MCF 10A (cell line): ENCODE measurements at regions of chr20 and their contacts with region 1.

Region 1: DNA sequence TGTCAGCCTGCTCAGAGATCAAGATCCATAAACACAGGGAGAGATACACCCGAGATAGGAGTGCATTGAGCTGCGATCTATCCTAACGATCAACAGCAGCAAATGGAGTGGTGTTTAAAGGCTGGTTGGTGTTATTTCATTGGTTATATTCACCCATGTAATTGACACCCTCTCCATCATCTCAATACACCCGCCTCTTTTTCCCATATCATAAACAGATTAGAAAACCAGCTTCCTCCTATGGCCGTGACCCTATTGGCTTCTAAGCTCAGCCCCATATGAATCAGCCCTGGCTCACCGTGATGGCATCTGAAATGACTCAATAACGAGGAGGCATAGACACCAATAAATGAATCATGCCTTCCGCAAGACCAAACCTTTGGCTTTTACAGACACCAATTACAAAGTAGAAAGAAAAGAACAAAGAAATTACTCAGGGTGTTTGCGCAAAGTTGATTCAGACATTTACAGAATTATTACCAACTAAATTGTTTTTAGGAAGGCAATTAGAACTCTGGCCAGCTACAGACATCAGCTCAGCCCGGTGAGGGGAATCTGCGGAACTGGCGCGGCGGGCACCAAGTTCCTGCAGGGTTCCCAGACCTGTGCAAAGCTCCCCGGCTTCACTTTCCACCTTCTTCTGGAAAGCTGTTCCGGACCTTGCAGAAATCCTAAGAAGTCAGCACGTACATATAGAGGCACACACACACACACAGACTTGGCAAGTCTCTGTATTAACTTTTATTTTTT is 11.5 kb downstream of the PMEPA1 start:
- DNase-seq: peak; percentile 99
- H3K4me3 Mint-ChIP-seq: peak overlapping the region; percentile 64
- H3K27ac Mint-ChIP-seq: peak overlapping the region; percentile 66
- H3K4me1 Mint-ChIP-seq: peaks cover 42% of the 10 kb centered on the region
- H3K27me3 Mint-ChIP-seq: no peaks in the 10 kb centered on the region
- CTCF ChIP-seq: no peak

Region 2: DNA sequence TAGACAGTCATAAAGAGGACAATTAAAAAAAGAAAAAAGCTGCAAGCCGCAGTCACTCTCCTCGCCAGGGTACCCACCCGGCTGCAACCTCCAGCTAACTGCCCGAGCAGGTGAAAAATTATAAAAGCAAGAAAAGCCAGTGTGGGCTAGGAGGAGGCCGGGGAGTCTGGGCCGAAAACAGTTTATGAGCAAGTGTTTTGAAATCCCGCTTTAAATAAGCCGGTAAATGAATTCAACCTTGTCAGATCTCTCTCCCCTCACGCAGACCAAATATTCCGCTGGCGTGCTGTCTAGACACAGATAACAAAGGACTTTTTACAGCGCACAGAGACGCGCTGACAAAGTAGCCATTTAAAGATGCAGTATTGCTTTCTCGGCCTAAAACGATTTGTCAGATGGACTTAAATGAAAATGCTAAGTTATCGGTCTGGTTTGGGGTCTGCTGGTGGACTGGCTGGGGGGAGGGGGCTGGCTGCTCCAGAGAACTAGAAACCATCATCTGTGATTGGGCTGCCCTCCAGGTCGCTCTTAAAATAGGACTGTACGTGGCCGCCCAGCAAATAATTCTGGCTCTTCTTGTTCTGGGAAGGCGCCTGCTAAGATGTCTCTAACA is 13.0 kb before region 1 on chr20:
- CTCF ChIA-PET with region 1: interaction called, 8 read pairs
- POLR2A ChIA-PET with region 1: interaction called, 12 read pairs
- intact Hi-C with region 1: no loop called
- DNase-seq: no peak
- H3K4me3 Mint-ChIP-seq: no peak overlapping the region
- H3K27ac Mint-ChIP-seq: no peak overlapping the region
- H3K4me1 Mint-ChIP-seq: peaks cover 22% of the 10 kb centered on the region
- H3K27me3 Mint-ChIP-seq: no peaks in the 10 kb centered on the region
- CTCF ChIP-seq: no peak

Region 3: DNA sequence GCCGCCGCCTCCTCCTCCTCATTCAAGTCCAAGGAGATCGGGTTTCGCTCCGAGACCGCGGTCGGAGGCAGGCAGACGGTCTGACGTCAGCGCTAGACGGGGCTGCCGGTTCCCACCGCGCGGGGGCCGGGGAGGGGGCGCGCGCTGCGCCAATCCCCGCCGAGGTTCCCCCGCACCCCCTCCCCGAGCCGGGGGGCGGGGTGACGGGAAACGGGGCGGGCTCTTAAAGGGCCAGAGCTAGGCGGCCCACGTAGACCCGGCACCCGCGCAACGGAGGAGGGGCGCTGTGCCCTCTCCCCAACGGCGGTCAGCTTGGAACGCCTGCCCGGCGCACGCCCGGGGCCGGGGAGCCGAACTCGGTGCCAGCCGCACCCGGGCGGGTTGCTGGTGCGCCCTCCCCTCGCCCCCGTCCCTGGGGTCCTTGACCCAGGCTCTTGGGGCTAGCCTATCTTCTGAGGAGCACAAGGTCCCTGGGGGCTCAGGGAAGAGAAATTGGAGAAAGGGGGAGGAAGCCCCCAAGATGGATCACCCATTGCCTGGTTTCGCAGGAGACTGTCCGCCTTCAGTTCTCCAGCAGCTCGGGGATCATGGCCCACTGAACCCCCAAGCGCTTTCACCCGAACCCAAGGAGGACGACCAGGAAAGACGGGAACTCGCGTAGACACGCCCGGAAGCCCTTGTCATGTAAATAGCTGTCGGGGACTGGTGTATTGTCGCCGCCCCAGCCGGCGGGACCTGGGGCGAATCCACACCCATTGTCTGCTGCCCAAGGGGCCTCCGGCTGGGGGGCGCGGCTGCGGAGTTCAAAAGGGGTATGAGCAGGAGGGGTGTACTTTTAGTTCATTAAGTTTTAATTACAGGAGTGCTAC is 11.9 kb after region 1 on chr20 and contains the start of gene PMEPA1:
- CTCF ChIA-PET with region 1: interaction called, 21 read pairs
- POLR2A ChIA-PET with region 1: interaction called, 185 read pairs
- intact Hi-C with region 1: loop called (anchors 1 kb)
- DNase-seq: peak; percentile 93
- H3K4me3 Mint-ChIP-seq: peak within 1 kb of the TSS; percentile 100
- H3K27ac Mint-ChIP-seq: peak within 1 kb of the TSS; percentile 96
- H3K4me1 Mint-ChIP-seq: peaks cover 47% of the 10 kb centered on the region
- H3K27me3 Mint-ChIP-seq: no peaks in the 10 kb centered on the region
- CTCF ChIP-seq: no peak
- total RNA-seq, gene PMEPA1: 60.6 and 68.5 TPM in 2 replicates

Region 4: DNA sequence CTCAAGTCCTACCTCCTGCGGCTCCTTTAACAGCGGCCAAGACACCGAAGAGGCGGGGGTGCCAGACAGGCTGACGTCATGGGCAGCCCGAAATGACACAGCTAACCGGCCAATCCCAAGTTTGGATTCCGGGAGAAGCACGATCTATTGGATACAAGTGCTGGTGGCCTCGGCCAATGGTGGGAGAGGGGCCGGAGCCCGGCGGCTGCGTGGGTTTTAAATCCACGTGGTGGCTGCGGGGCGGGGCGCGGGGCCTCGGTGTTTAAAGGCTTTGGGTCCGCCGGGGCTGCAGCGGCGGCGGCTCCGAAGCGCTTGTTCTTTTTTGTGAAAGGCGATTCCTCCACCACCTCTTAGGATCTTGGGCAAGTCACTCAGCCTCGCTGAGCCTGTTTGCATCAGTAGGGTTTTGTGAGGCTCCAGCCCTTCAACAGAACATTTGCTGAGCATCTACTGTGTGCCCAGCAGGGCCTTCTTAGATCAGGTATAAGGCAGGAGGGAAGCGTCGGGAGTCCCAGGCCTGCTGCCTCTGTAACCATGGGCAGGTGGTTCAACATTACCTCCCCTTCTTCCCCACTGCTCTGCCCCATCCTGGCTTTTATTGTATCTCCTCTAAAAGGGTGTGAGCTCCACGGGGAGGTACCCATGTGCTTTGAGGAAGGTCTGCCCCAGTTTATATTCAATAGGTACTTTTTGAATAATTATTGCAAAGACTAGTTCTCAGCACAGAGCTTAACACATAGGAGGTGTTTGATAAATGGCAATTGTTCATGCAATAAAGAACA is 20.4 kb after region 1 on chr20:
- CTCF ChIA-PET with region 1: interaction called, 7 read pairs
- POLR2A ChIA-PET with region 1: interaction called, 19 read pairs
- intact Hi-C with region 1: loop called (anchors 2 kb)
- DNase-seq: peak; percentile 98
- H3K4me3 Mint-ChIP-seq: peak overlapping the region; percentile 68
- H3K27ac Mint-ChIP-seq: no peak overlapping the region
- H3K4me1 Mint-ChIP-seq: peaks cover 29% of the 10 kb centered on the region
- H3K27me3 Mint-ChIP-seq: peaks cover 11% of the 10 kb centered on the region
- CTCF ChIP-seq: no peak

Region 5: DNA sequence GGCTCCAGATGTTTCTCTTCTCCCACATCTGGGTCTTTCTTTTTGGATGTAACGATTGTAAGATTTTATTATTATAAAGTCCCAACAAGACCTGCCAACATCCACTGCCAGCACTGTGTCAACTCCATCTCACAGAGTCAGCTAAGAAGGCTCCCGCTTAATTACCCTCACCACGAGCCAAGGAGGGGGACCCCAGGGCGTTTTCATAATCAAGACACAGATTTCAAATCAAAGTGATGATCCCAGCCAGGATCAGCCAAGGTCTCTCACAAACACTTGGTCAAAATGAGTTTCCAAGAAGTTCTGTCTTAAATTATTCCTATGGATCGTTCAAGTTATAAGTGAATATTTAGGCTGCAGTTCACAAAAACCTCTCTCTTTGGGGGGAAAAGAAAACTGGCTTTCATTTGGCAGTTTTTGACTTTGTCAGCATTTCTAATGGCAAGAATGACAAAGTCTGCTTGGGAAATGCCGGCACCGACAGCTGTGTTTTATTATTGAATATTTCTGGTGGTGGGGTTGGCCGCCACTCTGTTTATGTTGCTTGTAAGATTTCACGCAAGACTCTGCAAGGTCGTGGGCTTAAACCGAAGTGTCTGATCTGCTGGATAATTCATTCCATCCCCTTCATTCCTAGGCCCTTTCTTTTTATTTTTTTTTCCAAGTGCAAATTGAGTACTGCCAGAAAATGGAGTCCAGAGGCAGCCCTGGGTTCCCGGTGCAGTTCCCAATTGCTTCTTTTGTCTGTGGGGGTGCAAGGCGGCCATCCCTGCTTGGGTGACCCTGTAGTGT is 181.7 kb after region 1 on chr20:
- CTCF ChIA-PET with region 1: interaction called, 3 read pairs
- POLR2A ChIA-PET with region 1: no interaction called
- intact Hi-C with region 1: loop called (anchors 10 kb)
- DNase-seq: no peak
- H3K4me3 Mint-ChIP-seq: no peak overlapping the region
- H3K27ac Mint-ChIP-seq: no peak overlapping the region
- H3K4me1 Mint-ChIP-seq: peaks cover 8% of the 10 kb centered on the region
- H3K27me3 Mint-ChIP-seq: peaks cover 76% of the 10 kb centered on the region
- CTCF ChIP-seq: no peak

Region 6: DNA sequence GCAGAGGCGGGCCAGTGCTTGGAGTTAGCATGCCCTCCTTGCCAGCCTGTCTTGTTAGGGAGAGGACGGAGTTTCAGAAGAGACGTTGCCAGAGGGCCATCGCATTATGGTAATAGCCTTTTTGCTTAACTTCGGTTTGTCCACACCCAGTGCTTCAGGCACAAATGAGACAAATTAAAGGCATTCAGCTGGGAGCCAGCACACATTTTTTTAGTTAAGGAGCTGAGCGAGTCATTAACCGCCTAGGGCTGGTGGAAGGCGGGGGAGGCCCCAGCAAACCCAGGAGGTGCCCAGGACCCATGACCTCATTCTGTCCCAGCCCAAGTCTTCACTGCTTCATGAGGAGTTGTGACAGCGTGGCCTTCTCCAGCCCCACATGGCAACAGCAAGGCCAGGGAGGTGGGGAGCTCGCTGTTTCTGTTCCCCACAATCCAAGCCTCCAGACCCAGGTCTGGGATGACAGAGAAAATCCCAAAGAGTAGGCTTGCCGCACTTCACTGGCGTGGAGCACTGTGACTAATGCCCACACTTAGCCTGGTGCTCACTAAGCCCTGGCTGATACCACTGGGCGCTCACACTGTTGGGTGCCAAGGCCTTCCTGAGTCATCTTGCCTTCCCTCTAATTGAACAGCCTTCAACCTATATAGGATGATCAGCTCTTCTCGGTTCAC is 293.1 kb after region 1 on chr20:
- CTCF ChIA-PET with region 1: no interaction called
- POLR2A ChIA-PET with region 1: interaction called, 10 read pairs
- intact Hi-C with region 1: loop called (anchors 5 kb)
- DNase-seq: peak; percentile 92
- H3K4me3 Mint-ChIP-seq: peak overlapping the region; percentile 34
- H3K27ac Mint-ChIP-seq: peak overlapping the region; percentile 85
- H3K4me1 Mint-ChIP-seq: peaks cover 22% of the 10 kb centered on the region
- H3K27me3 Mint-ChIP-seq: no peaks in the 10 kb centered on the region
- CTCF ChIP-seq: no peak

Region 7: GRCh38 chr20:58112017-58112781 is 413.9 kb after region 1 on chr20:
- CTCF ChIA-PET with region 1: interaction called, 4 read pairs
- POLR2A ChIA-PET with region 1: interaction called, 18 read pairs
- intact Hi-C with region 1: no loop called
- DNase-seq: peak; percentile 92
- H3K4me3 Mint-ChIP-seq: peak overlapping the region; percentile 15
- H3K27ac Mint-ChIP-seq: peak overlapping the region; percentile 87
- H3K4me1 Mint-ChIP-seq: peaks cover 36% of the 10 kb centered on the region
- H3K27me3 Mint-ChIP-seq: no peaks in the 10 kb centered on the region
- CTCF ChIP-seq: no peak